Activated CD8-positive, alpha-beta T cell treated with anti-CD3 and anti-CD28 coated beads, Interleukin-2, amount 10 ng/mL, durations not matched to agents 7 days and 5 days (primary cell): ENCODE measurements at regions of chr12 and their contacts with region 1.

Region 1: GRCh38 chr12:55659486-55660385 is 23.0 kb downstream of the OR10P1 start:
- DNase-seq: no peak
- ATAC-seq: no peak
- H3K4me3 Mint-ChIP-seq: no peak overlapping the region
- H3K27ac Mint-ChIP-seq: no peak overlapping the region
- H3K4me1 Mint-ChIP-seq: no peaks in the 10 kb centered on the region
- H3K27me3 Mint-ChIP-seq: peaks cover 16% of the 10 kb centered on the region

Region 2: GRCh38 chr12:55188974-55189556 is 470.7 kb before region 1 on chr12:
- CTCF ChIA-PET with region 1: interaction called, 12 read pairs
- POLR2A ChIA-PET with region 1: no interaction called
- DNase-seq: peak; percentile 72
- ATAC-seq: peak; percentile 69
- H3K4me3 Mint-ChIP-seq: no peak overlapping the region
- H3K27ac Mint-ChIP-seq: no peak overlapping the region
- H3K4me1 Mint-ChIP-seq: no peaks in the 10 kb centered on the region
- H3K27me3 Mint-ChIP-seq: peaks cover 19% of the 10 kb centered on the region

Region 3: DNA sequence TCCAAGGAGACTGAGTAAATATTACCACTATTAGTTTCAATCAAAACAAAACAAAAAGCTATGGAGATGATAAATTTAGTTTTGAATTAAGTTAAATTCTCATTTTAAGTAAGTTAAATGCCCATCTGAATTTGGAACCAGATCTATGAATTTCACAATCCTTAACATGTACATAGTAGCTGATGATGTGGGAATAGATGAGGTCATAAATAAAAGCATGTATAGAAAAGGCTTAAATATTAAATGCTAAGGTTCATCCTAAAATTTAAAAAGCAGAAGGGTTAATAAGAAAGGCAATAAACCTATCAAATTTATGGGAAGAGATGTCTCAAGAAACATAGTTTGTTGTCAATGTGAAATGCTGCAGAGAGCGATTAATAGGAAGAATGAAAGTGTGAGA is 83.6 kb before region 1 on chr12:
- CTCF ChIA-PET with region 1: no interaction called
- POLR2A ChIA-PET with region 1: no interaction called
- DNase-seq: no peak
- ATAC-seq: no peak
- H3K4me3 Mint-ChIP-seq: no peak overlapping the region
- H3K27ac Mint-ChIP-seq: no peak overlapping the region
- H3K4me1 Mint-ChIP-seq: no peaks in the 10 kb centered on the region
- H3K27me3 Mint-ChIP-seq: peaks cover 3% of the 10 kb centered on the region

Region 4: DNA sequence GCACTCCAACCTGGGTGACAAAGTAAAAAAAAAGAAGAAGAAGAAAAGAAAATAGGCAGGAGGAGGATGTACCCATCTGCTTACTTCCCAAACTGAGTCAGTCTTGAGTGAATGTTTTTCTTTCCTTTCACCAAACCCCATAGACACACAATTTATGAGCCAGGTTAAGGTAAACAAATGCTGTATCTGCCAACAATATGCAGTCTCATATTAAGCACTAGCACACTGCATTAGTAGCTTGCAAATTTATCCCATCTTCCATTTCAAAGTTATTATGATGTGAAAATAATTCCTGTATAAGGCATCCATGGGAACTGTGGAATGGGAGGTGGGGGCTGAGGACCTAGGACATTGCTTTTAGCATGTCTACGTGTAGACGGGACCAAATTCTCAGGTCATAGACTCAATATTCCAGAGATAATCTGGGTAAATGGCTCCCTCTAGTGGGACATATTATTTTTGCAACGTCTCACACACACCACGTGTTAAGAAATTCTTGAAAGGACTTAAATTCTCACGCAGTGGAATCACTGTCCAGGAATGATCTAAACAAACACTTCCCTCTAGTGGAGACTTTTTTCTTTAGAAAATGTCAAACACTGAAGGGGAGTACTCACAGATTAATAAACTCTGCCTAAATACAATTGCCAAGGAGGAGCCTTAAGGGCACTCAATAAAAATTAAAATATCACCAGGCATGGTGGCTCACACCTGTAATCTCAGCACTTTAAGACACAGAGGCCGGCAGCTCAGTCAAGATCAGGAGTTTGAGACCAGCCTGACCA is 40.2 kb before region 1 on chr12:
- CTCF ChIA-PET with region 1: interaction called, 29 read pairs
- POLR2A ChIA-PET with region 1: no interaction called
- DNase-seq: peak; percentile 73
- ATAC-seq: peak; percentile 88
- H3K4me3 Mint-ChIP-seq: no peak overlapping the region
- H3K27ac Mint-ChIP-seq: no peak overlapping the region
- H3K4me1 Mint-ChIP-seq: no peaks in the 10 kb centered on the region
- H3K27me3 Mint-ChIP-seq: peaks cover 14% of the 10 kb centered on the region

Region 5: DNA sequence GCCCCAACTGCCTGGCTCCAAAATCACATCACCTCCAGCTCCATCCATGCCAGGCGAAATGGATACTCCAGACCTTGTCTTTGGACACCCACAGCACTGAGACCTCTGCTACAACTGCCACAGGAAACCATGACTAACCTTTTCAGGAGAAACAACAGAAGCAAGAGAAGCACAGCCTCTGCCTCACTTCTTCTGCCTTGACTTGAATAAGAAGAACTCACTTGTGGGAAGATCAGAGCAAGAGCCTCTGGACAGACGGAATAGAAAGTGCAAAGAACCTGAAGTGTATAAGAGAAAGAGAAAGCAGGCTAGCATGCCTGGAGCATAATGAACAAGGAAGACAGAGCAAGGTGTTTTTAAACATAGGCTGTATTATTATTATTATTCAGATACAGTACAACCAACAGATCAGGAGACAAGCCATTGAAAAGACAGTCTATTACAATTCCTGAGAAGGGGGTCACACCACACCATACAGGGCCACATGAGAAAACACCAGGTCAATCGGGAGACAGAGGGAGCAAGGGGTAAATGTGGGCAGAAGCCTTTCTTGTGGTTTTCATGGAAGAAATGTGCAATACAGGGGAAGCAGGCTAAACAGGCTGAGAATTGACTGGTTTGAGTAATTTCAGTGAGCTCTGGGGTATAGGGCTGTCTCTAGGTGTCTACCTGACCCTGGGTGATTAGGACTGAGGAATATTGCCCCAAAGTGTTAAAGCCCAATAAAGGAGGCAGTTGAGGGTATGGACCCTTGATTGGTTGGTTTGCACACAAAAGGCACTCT is 30.5 kb before region 1 on chr12:
- CTCF ChIA-PET with region 1: interaction called, 18 read pairs
- POLR2A ChIA-PET with region 1: no interaction called
- DNase-seq: no peak
- ATAC-seq: no peak
- H3K4me3 Mint-ChIP-seq: no peak overlapping the region
- H3K27ac Mint-ChIP-seq: no peak overlapping the region
- H3K4me1 Mint-ChIP-seq: peaks cover 11% of the 10 kb centered on the region
- H3K27me3 Mint-ChIP-seq: peaks cover 2% of the 10 kb centered on the region

Region 6: GRCh38 chr12:55642669-55643068 is 17.1 kb before region 1 on chr12:
- CTCF ChIA-PET with region 1: interaction called, 112 read pairs
- POLR2A ChIA-PET with region 1: no interaction called
- DNase-seq: peak; percentile 62
- ATAC-seq: no peak
- H3K4me3 Mint-ChIP-seq: no peak overlapping the region
- H3K27ac Mint-ChIP-seq: no peak overlapping the region
- H3K4me1 Mint-ChIP-seq: peaks cover 26% of the 10 kb centered on the region
- H3K27me3 Mint-ChIP-seq: peaks cover 5% of the 10 kb centered on the region

Region 7: DNA sequence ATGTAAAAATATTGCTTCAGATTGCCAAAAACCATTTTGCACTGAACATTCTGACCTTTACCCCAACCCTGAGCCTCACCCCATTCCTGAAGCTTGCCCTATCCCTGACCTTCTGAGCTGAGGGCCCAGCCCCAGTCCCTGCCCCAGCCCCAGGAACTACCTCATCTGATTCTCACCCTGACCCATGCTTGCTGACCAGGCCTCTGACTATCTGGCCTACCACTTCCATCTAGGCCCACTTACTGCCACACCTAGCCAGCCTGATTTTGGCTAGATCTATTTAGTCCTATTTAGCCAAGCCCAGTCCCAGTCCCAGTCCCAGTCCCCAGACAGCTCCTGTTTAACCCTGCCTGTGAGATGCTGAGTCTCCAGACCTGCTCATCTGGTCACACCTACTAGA is 10.5 kb after region 1 on chr12:
- CTCF ChIA-PET with region 1: interaction called, 17 read pairs
- POLR2A ChIA-PET with region 1: no interaction called
- DNase-seq: no peak
- ATAC-seq: no peak
- H3K4me3 Mint-ChIP-seq: no peak overlapping the region
- H3K27ac Mint-ChIP-seq: no peak overlapping the region
- H3K4me1 Mint-ChIP-seq: no peaks in the 10 kb centered on the region
- H3K27me3 Mint-ChIP-seq: peaks cover 14% of the 10 kb centered on the region

Region 8: DNA sequence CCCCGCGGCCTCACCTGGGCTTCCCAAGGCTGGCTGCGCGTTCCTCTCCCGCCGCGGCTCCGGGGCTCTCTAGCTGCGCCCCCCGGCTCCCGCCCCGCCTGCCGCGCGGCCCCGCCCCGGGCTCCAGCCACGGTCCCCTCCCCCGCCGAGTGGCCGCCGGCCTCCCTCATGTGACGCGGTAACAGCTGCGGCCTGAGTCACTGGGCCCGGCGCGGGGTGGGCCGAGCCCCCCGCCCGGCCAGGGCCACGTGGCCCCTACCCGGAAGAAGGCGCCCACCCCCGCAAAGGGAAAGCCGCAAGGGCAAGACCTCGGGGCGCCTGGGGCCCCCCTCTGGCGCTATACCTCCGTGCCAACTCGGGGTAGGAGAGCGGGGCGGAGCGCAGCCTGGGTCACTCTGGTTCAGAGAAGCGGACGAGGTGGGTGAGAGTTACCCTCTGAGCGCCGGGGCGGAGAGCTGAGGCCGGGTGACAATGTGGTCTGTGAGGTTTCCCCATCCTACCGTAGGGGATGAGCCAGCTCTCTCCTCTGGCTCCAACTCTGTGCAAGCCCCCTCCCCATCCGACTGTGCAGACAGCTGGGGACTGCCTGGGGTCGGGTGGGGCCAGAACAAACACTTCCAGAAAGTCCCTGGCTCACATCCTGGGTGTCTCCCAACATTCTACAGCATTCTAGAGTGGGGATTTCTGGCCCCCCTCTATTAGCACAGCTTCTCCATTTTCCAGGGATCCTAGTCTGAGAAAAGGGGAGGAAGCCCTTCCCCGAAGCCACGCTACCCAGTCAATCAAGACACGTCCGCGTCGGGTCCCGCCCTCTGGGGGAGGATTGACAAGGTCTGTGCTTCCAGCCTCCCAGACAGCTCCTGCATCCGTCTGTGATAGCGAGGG is 69.4 kb after region 1 on chr12 and contains the start of gene CD63:
- CTCF ChIA-PET with region 1: interaction called, 11 read pairs
- POLR2A ChIA-PET with region 1: no interaction called
- DNase-seq: peak; percentile 75
- ATAC-seq: peak; percentile 64
- H3K4me3 Mint-ChIP-seq: peak within 1 kb of the TSS; percentile 84
- H3K27ac Mint-ChIP-seq: peak within 1 kb of the TSS; percentile 93
- H3K4me1 Mint-ChIP-seq: peaks cover 59% of the 10 kb centered on the region
- H3K27me3 Mint-ChIP-seq: no peaks in the 10 kb centered on the region
- total RNA-seq, gene CD63: 203 to 206 TPM